BJ (cell line): ENCODE measurements at regions of chr10 and their contacts with region 1.

Region 1: GRCh38 chr10:100562008-100562711 is 26.4 kb downstream of the HIF1AN start:
- DNase-seq: no peak
- H3K4me3 ChIP-seq: no peak overlapping the region
- H3K27me3 ChIP-seq: peaks cover 8% of the 10 kb centered on the region
- CTCF ChIP-seq: peak; percentile 77

Region 2: DNA sequence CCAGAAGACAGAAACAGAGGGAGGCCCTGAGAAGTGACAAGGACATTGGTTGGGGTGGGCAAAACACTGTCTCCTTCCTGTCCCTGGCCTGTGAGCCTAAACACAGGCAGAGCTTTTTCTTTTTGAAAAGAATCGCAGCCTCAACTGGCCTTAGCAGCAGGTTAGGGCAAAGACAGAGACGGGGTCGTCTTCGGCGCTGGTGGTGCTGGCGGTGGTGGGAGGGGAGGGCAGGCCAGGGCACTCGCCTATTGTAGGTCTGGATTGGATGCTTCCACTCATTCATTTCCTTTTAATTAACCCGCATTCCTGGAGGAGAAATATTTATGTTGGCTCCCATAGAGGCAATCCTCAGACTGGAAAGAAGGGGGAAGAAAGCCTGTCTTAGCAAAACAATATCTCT is 76.8 kb before region 1 on chr10:
- CTCF ChIA-PET with region 1: no interaction called
- POLR2A ChIA-PET with region 1: no interaction called
- DNase-seq: no peak
- H3K4me3 ChIP-seq: no peak overlapping the region
- H3K27me3 ChIP-seq: peaks cover 9% of the 10 kb centered on the region
- CTCF ChIP-seq: no peak

Region 3: DNA sequence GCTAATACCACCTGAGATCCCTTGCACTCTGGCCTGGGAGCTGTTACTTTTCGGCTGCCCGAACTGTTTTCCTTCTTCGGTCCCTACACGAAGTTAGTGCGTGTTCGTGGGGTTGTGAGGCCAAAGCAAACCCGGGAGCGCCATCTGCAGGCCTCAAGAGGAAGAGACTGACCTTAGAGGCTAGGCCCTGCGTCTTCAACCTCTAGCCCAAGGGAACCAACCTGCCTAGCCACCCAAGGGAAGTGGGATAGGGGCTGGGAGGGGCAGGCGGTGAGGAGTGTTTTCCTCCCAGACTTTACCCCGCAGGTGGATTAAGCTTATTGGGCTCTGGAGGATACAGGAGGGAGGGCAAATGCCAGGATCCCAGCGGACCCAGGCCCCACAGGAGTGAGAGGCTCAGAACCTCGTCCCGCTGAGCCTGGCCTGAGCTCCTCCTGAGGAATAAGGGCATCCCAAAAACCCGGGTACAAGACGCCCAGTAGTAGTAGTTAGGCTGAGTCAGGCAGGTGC is 181.5 kb after region 1 on chr10:
- CTCF ChIA-PET with region 1: interaction called, 13 read pairs
- POLR2A ChIA-PET with region 1: no interaction called
- DNase-seq: no peak
- H3K4me3 ChIP-seq: no peak overlapping the region
- H3K27me3 ChIP-seq: peaks cover 62% of the 10 kb centered on the region
- CTCF ChIP-seq: peak; percentile 73

Region 4: GRCh38 chr10:100872034-100872791 is 310.1 kb after region 1 on chr10:
- CTCF ChIA-PET with region 1: interaction called, 10 read pairs
- POLR2A ChIA-PET with region 1: no interaction called
- DNase-seq: no peak
- H3K4me3 ChIP-seq: no peak overlapping the region
- H3K27me3 ChIP-seq: peaks cover 1% of the 10 kb centered on the region
- CTCF ChIP-seq: peak; percentile 63